PC-9 (cell line): ENCODE measurements at regions of chr16 and their contacts with region 1.

Region 1: DNA sequence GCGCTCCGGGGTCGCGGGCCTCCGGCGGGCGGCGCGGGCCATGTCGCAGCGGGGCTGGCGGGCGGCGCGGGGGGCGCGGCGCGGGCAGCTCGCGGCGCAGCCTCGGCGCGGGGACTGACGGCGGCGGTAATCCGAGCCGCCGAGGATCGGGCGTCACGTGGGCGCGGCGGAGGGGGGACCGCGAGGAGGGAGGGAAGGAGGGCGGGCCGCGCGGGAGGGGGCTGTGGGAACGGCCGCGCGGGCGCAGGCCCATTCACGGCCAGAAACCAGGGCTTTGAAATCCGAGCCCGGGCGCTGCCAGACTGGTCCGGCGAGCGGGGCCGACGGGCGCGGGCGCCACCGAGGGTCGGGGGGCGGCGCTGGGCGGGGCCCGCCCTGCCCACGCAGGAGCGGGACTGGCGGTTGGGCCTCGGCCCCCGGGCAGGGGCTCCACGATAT is at the start of gene MTSS2:
- DNase-seq: peak; percentile 66 to 82
- H3K4me3 ChIP-seq: peak within 1 kb of the TSS; percentile 93
- H3K27ac ChIP-seq: no peak within 1 kb of the TSS
- H3K4me1 ChIP-seq: peaks cover 30% of the 10 kb centered on the region
- H3K27me3 ChIP-seq: no peaks in the 10 kb centered on the region
- CTCF ChIP-seq: no peak
- total RNA-seq, gene MTSS2: 27.6 and 52.0 TPM in 2 replicates

Region 2: DNA sequence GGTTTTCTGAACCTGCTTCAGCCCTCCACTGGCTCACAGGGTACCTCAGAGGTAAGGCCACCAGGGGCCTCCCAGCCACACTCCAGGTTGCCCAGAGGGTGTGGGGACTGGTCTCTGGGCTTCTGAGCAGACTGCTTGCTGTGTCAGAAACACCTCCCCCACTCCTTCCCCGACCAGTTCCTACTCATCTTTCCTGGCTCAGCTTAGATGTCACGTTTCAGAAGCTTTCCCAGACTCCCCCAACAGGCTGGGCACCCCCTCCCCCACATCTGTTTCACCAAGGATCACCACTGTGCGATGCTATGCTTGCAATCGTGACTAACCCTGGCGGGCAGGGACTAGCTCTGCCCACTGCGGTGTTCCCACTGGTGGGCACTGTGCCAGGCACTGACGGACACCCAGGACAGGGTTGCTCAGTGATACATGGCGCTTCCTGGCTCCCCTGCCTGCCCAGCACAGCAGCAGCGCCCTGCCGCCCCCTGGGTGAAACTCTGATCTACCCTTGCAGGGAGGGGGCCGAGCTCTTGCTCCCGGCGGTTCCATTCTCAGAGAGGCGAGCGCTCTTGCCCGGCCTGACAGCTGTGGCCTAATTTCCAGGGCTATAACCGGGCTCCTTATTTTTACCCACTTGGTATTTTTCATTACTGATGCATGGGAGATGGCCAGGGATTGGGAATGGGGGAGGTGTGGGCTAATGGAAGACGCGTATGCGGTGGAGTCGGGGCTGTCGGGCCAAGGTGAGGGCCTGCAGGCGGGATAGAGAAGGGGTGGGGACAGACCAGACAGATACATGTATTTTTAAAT is 29.3 kb after region 1 on chr16:
- CTCF ChIA-PET with region 1: no interaction called
- POLR2A ChIA-PET with region 1: interaction called, 23 read pairs
- intact Hi-C with region 1: no loop called
- DNase-seq: peak; percentile 93 to 95
- H3K4me3 ChIP-seq: no peak overlapping the region
- H3K27ac ChIP-seq: peak overlapping the region; percentile 76
- H3K4me1 ChIP-seq: peaks cover 28% of the 10 kb centered on the region
- H3K27me3 ChIP-seq: no peaks in the 10 kb centered on the region
- CTCF ChIP-seq: peak; percentile 25

Region 3: DNA sequence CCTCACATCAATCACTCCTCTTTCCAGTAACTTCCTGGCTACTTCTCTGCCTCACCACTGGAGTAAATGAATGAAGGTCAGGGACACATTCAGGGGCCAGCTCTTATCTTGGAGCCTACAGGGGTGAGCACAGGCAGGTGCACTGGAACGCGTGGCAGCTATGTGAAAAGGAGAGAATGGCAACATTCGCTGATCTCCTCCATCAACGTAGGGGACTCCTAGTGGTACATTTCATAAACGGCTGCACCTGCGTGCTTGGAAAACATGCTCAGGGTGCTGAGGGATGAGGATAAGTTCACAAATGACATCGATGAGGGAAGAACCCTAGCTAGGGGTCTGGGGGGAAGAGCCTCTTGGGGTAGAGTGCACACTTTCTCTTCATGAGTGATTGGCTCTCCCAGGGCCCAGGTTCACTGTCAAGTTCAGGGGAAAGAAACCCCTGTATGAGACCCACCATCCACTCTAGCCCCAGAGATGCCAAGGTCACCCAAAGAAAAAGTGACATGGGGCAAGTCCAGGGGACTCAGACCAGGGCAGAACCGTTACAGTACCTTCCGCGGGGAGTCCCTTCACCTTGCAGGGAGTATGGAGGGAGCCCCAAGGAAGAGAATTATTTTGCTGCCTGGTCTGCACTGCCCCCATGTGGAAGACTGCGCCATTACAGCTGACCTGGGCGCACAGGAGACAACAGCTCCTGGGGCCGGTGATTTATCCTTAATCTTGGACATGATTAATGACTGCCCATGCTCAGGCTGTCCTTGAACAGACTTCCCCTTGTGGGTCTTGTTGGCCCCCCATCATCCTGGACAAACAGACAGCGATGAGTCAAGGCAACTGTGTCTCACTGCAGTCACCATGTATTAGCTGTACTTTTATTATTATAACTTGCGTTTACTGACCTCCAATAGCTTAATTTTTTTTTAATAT is 84.9 kb after region 1 on chr16:
- CTCF ChIA-PET with region 1: interaction called, 5 read pairs
- POLR2A ChIA-PET with region 1: interaction called, 13 read pairs
- intact Hi-C with region 1: no loop called
- DNase-seq: peak; percentile 67 to 76
- H3K4me3 ChIP-seq: no peak overlapping the region
- H3K27ac ChIP-seq: no peak overlapping the region
- H3K4me1 ChIP-seq: peaks cover 25% of the 10 kb centered on the region
- H3K27me3 ChIP-seq: no peaks in the 10 kb centered on the region
- CTCF ChIP-seq: peak; percentile 98

Region 4: GRCh38 chr16:71338193-71338592 is 652.2 kb after region 1 on chr16:
- CTCF ChIA-PET with region 1: no interaction called
- POLR2A ChIA-PET with region 1: no interaction called
- intact Hi-C with region 1: loop called (anchors 5 kb)
- DNase-seq: peak; percentile 82 to 98
- H3K4me3 ChIP-seq: no peak overlapping the region
- H3K27ac ChIP-seq: peak overlapping the region; percentile 100
- H3K4me1 ChIP-seq: peaks cover 47% of the 10 kb centered on the region
- H3K27me3 ChIP-seq: no peaks in the 10 kb centered on the region
- CTCF ChIP-seq: no peak